SK-N-SH (cell line): ENCODE measurements at regions of chr17 and their contacts with region 1.

Region 1: DNA sequence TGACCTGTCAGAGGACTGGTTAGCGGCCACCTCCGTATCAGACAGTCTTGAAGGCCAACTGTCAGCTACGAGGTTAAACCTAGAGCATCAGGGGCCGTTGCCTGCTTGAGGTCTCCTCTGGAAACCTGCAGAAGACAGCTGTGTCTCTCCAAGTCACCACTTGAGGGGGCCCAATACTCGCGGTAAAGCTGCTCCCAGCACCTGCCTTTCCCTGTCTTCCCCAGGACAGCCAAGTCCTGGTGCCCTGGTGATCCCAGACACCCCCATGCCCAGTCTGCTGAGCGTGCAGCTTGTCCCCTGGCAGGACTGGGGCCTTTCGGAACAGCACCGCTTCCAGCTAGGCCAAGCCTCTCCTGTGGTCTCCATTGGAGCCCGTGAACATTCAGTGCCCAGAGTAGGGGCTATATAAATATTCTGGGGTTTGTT is 80.1 kb downstream of the DNAH17 start:
- DNase-seq: peak; percentile 96
- H3K4me3 ChIP-seq: no peak overlapping the region
- H3K27ac ChIP-seq: no peak overlapping the region
- H3K4me1 ChIP-seq: peaks cover 0 to 23% of the 10 kb centered on the region in 2 experiments; a peak in 1 of 4 replicates
- H3K27me3 ChIP-seq: no peaks in the 10 kb centered on the region
- CTCF ChIP-seq: peak; percentile 92
- EP300 ChIP-seq: no peak
- RAD21 ChIP-seq: peak; percentile 100

Region 2: GRCh38 chr17:78484300-78485246 is 12.6 kb before region 1 on chr17:
- CTCF ChIA-PET with region 1: interaction called, 36 read pairs
- POLR2A ChIA-PET with region 1: no interaction called
- DNase-seq: no peak
- H3K4me3 ChIP-seq: no peak overlapping the region
- H3K27ac ChIP-seq: no peak overlapping the region
- H3K4me1 ChIP-seq: no peaks in the 10 kb centered on the region; a peak in 1 of 4 replicates
- H3K27me3 ChIP-seq: no peaks in the 10 kb centered on the region
- CTCF ChIP-seq: no peak
- EP300 ChIP-seq: no peak
- RAD21 ChIP-seq: no peak

Region 3: GRCh38 chr17:78517421-78517820 is 20.3 kb after region 1 on chr17:
- CTCF ChIA-PET with region 1: interaction called, 14 read pairs
- POLR2A ChIA-PET with region 1: no interaction called
- DNase-seq: peak; percentile 74
- H3K4me3 ChIP-seq: no peak overlapping the region
- H3K27ac ChIP-seq: peak overlapping the region in 1 of 2 experiments; percentile 53; a peak in 2 of 4 replicates
- H3K4me1 ChIP-seq: peaks cover 0 to 7% of the 10 kb centered on the region in 2 experiments; a peak in 1 of 4 replicates
- H3K27me3 ChIP-seq: no peaks in the 10 kb centered on the region
- CTCF ChIP-seq: no peak
- EP300 ChIP-seq: peak in 1 of 2 experiments; percentile 37; a peak in 1 of 4 replicates
- RAD21 ChIP-seq: no peak

Region 4: GRCh38 chr17:78716814-78717393 is 219.8 kb after region 1 on chr17:
- CTCF ChIA-PET with region 1: interaction called, 351 read pairs
- POLR2A ChIA-PET with region 1: interaction called, 7 read pairs
- DNase-seq: peak; percentile 82
- H3K4me3 ChIP-seq: peak overlapping the region; percentile 31 to 58
- H3K27ac ChIP-seq: peak overlapping the region; percentile 39 to 98
- H3K4me1 ChIP-seq: peaks cover 28 to 59% of the 10 kb centered on the region in 2 experiments
- H3K27me3 ChIP-seq: no peaks in the 10 kb centered on the region
- CTCF ChIP-seq: no peak; the same call in 1 of the 2 replicates
- EP300 ChIP-seq: peak in 1 of 2 experiments; percentile 57; a peak in 2 of 4 replicates
- RAD21 ChIP-seq: peak; percentile 21

Region 5: DNA sequence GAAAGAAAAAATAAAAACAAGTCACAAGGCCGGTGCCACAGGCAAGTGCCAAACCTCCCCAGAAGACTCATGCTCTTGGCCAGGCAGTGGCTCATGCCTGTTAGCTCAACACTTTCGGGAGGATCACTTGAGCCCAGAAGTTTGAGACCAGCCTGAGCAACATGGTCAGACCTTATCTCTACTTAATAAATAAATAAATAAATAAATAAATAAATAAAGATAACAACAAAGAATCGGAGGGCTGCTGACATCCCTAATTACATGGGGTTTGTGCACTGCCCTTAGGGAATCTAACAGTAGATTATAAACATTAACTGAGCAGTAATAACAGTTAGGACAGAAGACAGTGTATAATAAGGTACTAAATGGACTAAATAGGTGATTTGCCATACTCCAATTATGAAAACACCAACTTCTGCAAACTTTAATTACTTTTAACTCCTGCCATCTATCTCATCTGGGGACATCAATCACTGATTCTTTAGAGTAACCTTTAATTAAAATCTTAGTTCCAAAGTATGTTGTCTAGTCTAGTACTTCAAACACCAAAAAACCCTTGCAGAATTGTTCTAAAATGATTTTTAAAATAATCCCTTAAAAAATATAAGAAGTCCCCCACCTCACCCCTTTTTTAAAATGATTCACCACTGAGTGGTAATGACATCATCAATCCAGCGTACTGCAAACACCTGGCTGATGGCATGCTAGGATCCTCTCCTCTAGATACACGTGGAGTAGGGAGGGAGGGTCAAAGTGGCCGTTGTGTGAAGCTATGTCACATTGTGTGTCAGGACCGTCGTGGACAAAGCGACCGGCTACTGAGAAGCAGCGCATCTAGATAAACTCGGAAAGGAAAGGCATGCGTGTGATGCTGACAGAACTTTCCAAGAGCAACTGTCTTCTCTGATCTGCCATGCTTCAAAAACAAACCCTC is 256.5 kb after region 1 on chr17:
- CTCF ChIA-PET with region 1: interaction called, 33 read pairs
- POLR2A ChIA-PET with region 1: no interaction called
- DNase-seq: no peak
- H3K4me3 ChIP-seq: no peak overlapping the region
- H3K27ac ChIP-seq: no peak overlapping the region
- H3K4me1 ChIP-seq: peaks cover 4 to 8% of the 10 kb centered on the region in 2 experiments; a peak in 2 of 4 replicates
- H3K27me3 ChIP-seq: no peaks in the 10 kb centered on the region
- CTCF ChIP-seq: no peak
- EP300 ChIP-seq: no peak
- RAD21 ChIP-seq: no peak

Region 6: DNA sequence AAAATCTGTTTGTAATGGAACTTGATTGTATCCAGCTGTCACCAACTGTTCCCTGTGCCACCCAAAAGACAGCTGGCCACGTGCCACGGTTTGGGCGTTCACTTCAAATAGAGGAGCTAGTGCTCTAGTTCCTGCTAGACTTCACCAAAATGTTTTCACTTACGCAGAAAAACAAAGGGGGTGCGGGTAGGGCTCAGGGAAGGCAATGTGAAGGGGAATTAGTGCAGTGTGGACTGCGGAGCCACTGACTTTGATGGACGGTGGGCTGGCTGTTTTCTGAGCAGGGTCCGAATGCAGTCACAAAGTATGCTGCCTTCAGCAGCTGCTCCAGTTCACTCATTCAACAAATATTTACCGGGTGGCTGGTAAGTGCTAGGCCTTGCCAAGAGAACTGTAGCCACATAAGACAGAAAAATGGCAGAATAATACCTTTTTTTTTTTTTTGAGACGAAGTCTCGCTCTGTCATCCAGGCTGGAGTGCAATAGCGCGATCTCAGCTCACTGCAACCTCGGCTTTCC is 292.6 kb after region 1 on chr17:
- CTCF ChIA-PET with region 1: interaction called, 30 read pairs
- POLR2A ChIA-PET with region 1: no interaction called
- DNase-seq: peak; percentile 46
- H3K4me3 ChIP-seq: no peak overlapping the region; a peak in 1 of 4 replicates
- H3K27ac ChIP-seq: peak overlapping the region; percentile 34 to 52
- H3K4me1 ChIP-seq: peaks cover 20% of the 10 kb centered on the region in 2 experiments; a peak in 2 of 4 replicates
- H3K27me3 ChIP-seq: no peaks in the 10 kb centered on the region
- CTCF ChIP-seq: no peak
- EP300 ChIP-seq: no peak
- RAD21 ChIP-seq: no peak

Region 7: GRCh38 chr17:78840725-78841611 is 343.8 kb after region 1 on chr17 and contains the start of gene USP36:
- CTCF ChIA-PET with region 1: interaction called, 14 read pairs
- POLR2A ChIA-PET with region 1: no interaction called
- DNase-seq: peak; percentile 100
- H3K4me3 ChIP-seq: peak within 1 kb of the TSS; percentile 75 to 84
- H3K27ac ChIP-seq: peak within 1 kb of the TSS; percentile 79 to 90
- H3K4me1 ChIP-seq: peaks cover 14 to 27% of the 10 kb centered on the region in 2 experiments; a peak in 3 of 4 replicates
- H3K27me3 ChIP-seq: no peaks in the 10 kb centered on the region
- CTCF ChIP-seq: no peak
- EP300 ChIP-seq: no peak; a peak in 1 of 4 replicates
- RAD21 ChIP-seq: no peak
- polyA plus RNA-seq, gene USP36: 34.6 and 41.2 TPM in 2 replicates